Activated CD4-positive, alpha-beta T cell treated with anti-CD3 and anti-CD28 coated beads, Interleukin-2, amount 10 ng/mL, durations not matched to agents 7 days and 5 days (primary cell): ENCODE measurements at regions of chr13 and their contacts with region 1.

Region 1: GRCh38 chr13:44917589-44918325 is 71.5 kb downstream of the NUFIP1 start:
- DNase-seq: peak; percentile 97
- H3K4me3 Mint-ChIP-seq: no peak overlapping the region
- H3K27ac Mint-ChIP-seq: no peak overlapping the region
- H3K4me1 Mint-ChIP-seq: peaks cover 3% of the 10 kb centered on the region
- H3K27me3 Mint-ChIP-seq: no peaks in the 10 kb centered on the region

Region 2: DNA sequence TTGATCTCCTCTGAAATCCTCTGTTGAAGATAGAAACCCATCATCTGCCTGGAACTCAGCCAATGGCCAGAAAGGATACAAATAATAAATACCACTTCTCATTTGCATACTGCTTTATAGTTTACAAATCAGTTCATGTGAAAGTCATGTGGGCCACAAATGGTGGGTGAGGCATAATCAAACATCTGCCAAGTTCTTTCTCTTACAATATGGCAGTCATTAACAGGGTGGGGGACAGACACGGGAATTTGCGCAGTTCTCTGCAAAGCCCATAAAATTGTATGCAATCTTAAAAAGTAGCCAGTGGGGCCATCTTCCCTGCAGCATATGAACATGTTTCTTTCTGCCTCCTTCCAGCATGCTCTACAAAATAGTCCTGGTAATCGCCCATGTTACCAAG is 11.9 kb after region 1 on chr13:
- CTCF ChIA-PET with region 1: interaction called, 13 read pairs
- POLR2A ChIA-PET with region 1: no interaction called
- DNase-seq: no peak
- H3K4me3 Mint-ChIP-seq: no peak overlapping the region
- H3K27ac Mint-ChIP-seq: no peak overlapping the region
- H3K4me1 Mint-ChIP-seq: peaks cover 3% of the 10 kb centered on the region
- H3K27me3 Mint-ChIP-seq: peaks cover 14% of the 10 kb centered on the region